Activated CD4-positive, alpha-beta memory T cell treated with anti-CD3 and anti-CD28 coated beads, Interleukin-2, amount 10 ng/mL, durations not matched to agents 7 days and 5 days (primary cell): ENCODE measurements at regions of chr15 and their contacts with region 1.

Region 1: GRCh38 chr15:73081321-73081958 is 29.2 kb downstream of the NEO1 start:
- DNase-seq: no peak
- H3K4me3 Mint-ChIP-seq: no peak overlapping the region
- H3K27ac Mint-ChIP-seq: no peak overlapping the region
- H3K4me1 Mint-ChIP-seq: peaks cover 6% of the 10 kb centered on the region
- H3K27me3 Mint-ChIP-seq: no peaks in the 10 kb centered on the region

Region 2: DNA sequence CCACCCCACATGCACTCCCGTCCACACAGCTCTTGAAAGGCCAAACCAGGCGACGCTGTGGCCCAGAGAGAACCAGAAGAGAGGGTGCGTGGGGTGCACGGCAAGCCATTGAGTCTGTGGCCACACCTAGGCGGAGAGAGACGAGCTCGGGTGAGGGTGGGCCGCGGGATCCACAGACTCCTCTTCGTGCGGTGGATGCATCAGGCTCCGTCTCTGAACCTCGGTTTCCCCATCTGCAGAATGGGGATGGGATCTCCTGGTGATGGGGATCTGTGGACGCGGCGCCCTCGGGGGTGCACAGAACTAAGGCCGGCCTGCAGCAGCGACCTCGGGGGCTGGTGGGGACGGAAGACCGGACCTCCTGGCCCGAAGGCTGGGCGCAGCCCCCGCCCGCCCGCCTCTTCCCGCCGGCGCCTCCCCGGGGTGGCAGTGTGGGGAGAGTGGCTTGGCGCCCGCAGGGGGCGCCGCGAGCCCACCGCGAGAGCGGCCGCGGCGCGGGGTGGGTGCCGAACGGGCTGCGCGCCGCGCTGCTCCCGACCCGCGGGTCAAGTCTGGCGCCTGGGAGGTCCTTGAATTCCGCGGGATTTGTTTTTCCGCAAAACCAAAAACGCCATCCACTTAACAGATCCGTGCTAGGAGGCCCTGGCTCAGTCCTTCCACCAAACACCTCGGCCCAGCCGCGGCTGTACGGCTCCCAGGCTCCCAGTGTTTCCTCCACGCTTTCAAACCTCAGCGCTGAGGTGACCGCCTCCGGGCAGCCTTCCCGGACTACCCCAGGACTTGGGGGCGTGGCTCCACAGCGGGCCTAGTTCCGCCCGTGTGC is 284.7 kb before region 1 on chr15:
- CTCF ChIA-PET with region 1: interaction called, 13 read pairs
- POLR2A ChIA-PET with region 1: no interaction called
- DNase-seq: peak; percentile 46
- H3K4me3 Mint-ChIP-seq: peak overlapping the region; percentile 75
- H3K27ac Mint-ChIP-seq: peak overlapping the region; percentile 32
- H3K4me1 Mint-ChIP-seq: peaks cover 34% of the 10 kb centered on the region
- H3K27me3 Mint-ChIP-seq: peaks cover 12% of the 10 kb centered on the region

Region 3: GRCh38 chr15:73190189-73190601 is 108.8 kb after region 1 on chr15:
- CTCF ChIA-PET with region 1: no interaction called
- POLR2A ChIA-PET with region 1: no interaction called
- DNase-seq: no peak
- H3K4me3 Mint-ChIP-seq: no peak overlapping the region
- H3K27ac Mint-ChIP-seq: no peak overlapping the region
- H3K4me1 Mint-ChIP-seq: no peaks in the 10 kb centered on the region
- H3K27me3 Mint-ChIP-seq: no peaks in the 10 kb centered on the region